Head of caudate nucleus (tissue), 42 donors: ENCODE measurements at regions of chr2 and their contacts with region 1.

Region 1: DNA sequence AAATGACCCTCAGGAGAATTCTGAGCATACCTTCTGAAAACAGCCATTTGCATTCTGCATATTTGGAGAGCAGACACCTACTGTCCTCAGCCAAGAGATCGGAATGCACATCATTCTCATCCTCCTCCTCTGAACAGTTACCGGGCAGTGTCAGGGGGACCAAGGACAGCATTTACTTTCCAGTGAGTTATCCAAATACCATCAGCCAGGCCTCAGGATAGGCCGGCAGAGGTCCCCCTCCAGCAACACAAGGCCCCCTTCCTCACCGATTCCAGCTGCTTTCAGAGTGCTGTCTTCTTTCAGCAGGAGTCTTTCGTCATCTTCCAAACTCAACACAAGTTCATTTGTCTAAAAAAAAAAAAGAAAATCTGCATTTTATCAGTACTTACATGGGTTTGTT is 55.3 kb downstream of the C2orf76 start:
- DNase-seq: peak in 1 of 42 donors; percentile 14

Region 2: DNA sequence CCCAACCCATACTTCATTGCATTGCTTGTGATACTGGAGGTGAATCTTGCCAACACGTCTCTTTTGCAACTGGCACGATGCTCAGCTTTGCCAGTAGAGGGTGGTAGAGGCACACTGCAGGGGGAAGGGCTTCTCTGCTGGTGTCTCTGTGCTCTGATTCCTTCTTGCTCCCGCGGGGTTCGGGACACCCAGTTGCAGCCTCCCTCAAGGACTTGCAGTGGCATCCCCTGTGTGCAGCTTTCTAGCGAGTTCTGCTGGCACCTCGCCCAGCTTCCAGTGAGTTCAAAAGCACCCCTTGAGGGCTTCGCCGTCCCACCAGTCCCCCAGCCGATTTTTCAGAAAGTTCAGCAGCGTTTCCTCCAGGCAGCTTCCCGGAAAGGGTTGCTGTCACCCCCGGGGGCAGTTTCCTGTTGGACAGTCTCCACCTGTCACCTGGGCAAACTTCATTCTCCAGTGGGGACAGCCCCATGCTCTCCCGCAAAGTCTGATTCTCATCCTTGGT is 428.6 kb before region 1 on chr2:
- intact Hi-C with region 1: loop called (anchors 5 kb)
- DNase-seq: peak; percentile 40 to 82 (median 70)

Region 3: DNA sequence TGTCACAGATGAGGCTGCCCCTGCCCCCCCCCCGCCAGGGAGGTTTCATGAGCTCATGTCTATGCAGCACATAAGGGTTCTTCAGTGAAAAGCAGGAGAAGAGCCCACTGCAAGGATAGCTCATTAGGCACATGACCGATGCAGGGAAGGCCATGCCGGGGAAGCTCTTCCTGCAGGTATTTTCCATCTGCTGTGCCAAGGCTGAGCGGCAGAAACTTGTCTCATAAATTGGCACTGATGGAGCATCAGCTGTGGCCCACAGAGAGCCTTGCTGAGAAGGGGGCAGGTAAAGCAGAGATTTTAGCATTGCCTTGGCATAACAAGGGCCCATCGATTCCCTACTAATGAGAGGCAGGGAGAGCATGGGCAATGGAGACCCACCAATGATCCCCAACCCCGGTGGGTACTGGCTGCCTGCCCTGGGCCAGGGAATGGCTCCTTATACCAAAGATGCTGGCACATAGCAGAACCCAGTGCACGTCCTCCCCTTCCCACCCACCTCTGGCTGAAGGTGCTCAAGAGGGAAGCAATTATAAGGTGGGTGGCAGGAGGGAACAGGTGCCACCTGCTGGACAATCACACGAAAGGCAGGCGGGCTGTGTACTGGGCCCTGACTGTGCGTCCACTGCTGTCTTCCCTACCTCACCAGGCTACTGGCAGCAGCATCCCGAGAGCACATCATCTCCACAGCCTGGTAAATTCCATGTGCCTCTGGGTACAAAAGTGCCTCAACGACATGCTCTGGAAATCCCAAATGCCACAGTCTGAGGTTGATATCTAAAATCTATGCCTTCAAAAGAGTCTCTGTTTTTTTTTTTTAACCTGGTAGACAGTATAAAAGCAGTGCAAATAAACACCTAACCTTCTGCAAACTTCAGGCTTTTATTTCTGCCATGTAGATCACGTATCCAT is 46.3 kb before region 1 on chr2:
- intact Hi-C with region 1: no loop called
- DNase-seq: peak in 14 of 42 donors; percentile 24 to 59 (median 32)

Region 4: DNA sequence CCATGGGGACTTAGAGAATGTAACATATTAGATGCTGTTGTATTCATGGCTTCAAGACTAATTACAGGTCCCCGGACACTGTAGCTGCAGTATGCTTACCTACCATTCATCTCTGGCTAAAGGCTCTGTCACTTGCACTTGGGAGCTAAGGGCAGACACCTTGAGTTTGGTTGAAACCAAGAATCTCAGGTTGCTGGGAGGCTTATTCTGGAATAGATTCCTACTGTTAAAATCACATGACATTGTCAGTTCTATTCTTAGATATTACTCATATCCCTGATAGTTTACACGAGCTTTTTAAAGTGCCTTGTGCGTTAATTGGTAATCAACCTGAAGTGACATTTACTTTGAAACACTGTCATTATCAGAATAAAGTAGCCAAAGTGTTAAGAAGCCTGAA is 628.6 kb after region 1 on chr2:
- intact Hi-C with region 1: no loop called
- DNase-seq: no peak